ENCODE measurements at regions of chr2 and their contacts with region 1.

Region 1: DNA sequence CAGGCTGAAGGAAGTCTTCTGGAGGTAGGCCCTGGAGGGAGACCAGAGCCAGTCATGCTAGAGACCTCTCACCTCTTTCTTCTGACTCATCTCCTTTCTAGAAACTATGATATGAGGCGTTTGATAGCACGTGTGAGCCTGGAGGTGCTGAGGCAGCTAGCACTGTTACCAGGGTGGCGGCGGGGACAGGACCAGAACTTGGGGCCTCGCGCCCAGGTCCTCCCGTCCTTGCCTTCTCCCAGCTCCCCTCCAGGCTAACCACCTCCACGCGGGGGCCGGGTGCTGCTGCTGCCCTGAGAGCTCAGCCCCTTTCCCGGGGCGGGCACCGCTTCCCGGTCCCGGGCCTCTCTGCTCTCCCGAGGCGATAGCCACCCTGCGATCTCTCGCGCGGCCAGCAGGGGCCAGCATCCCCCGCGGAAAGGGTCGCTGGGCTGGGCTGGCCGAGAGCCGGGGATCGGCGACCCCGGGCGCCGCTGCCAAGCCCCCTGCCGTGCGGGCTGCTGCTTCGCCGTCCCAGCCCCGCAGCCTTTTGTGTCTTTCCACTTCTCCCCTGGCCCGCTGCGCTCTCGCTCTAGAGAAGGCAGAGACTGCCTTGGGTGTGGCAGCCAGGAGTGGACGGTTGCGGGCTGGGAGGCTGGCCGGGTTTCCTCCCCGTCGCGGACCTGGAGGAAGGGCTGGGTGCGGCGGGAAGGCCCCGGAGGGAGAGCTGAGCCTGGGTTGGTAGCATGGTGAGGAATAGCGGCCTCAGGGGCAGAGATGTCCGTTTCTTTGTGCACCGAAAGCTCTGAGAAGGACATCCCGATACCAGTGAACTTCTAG is 49.1 kb downstream of the TMEM17 start:
- DNase-seq: peak; percentile 66
- H3K4me3 ChIP-seq: peak overlapping the region; percentile 88
- H3K27ac ChIP-seq: peak overlapping the region; percentile 91
- H3K4me1 ChIP-seq: peaks cover 20% of the 10 kb centered on the region
- H3K27me3 ChIP-seq: peaks cover 19% of the 10 kb centered on the region
- CTCF ChIP-seq: peak; percentile 97

Region 2: DNA sequence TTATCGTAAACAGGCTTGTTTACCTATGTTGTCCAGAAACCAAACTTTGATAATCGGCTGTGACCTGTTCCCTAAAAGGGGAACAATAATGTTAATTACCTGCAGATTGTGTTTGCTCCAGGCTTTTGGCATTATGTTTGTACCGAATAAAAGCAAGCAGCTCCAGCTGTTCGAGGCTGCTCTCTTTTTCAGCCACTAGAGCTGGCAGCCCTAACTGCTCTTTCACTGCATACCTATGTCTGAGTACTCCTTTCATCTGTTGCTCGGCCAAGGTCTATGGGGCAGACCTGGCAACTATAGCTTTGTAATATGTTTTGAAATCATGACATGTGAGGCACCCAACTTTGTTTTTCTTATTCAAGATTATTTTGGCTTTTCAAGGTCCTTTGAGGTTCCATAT is 170.7 kb after region 1 on chr2:
- intact Hi-C with region 1: no loop called
- DNase-seq: no peak
- H3K4me3 ChIP-seq: no peak overlapping the region
- H3K27ac ChIP-seq: no peak overlapping the region
- H3K4me1 ChIP-seq: no peaks in the 10 kb centered on the region
- H3K27me3 ChIP-seq: no peaks in the 10 kb centered on the region
- CTCF ChIP-seq: no peak

Region 3: DNA sequence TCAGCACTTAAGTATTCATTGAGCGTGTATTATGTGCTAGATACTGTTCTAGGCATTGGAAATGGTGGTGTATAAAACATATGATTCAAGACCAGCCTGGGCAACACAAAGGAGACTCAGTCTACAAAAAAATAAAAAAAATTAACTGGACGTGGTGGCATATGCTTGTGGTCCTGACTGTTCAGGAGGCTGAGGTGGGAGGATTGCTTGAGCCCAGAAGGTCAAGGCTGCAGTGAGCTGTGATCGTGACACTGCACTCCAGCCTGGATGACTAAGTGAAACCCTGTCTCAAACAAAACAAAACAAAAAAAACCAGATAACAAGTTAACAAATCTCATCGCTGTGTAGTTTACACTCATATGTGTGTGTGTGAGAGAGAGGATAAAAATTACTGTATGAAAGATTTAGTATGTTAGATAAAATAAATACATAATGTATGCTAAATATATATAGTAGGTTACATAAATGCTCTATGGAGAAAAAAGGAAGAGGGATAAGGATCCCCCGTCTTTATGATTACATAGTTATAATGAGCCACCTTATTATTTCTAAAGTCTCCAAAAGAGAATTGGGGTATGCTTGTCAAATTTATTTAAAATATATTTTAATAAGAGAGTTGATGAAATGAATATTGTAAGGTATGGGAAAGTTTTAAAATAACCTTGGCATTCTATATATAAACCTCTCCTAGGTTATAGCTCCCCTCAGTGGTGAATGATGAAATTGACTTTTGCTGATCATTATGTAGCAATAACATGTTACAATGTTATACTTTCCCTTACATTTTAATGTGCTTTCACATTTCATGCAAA is 317.8 kb after region 1 on chr2:
- intact Hi-C with region 1: loop called (anchors 2 kb)
- DNase-seq: no peak
- H3K4me3 ChIP-seq: no peak overlapping the region
- H3K27ac ChIP-seq: no peak overlapping the region
- H3K4me1 ChIP-seq: peaks cover 4% of the 10 kb centered on the region
- H3K27me3 ChIP-seq: no peaks in the 10 kb centered on the region
- CTCF ChIP-seq: peak; percentile 92

Measured in left ventricle myocardium inferior (tissue), 1 donor.